Heart left ventricle (tissue), 16 donors: ENCODE measurements at regions of chr19 and their contacts with region 1.

Region 1: GRCh38 chr19:48674921-48675824 is 2.4 kb upstream of the NTN5 start:
- DNase-seq: peak; percentile 79 to 87 (median 84)
- ATAC-seq: peak; percentile 58 to 89 (median 80)
- H3K4me3 ChIP-seq: no peak overlapping the region
- H3K27ac ChIP-seq: peak overlapping the region in 2 of 12 donors; percentile 2 to 46
- H3K4me1 ChIP-seq: peaks cover 0 to 12% (median 7%) of the 10 kb centered on the region in 12 donors
- H3K27me3 ChIP-seq: no peaks in the 10 kb centered on the region
- CTCF ChIP-seq: peak; percentile 76 to 94 (median 87)
- POLR2A ChIP-seq: no peak

Region 2: GRCh38 chr19:48713864-48714758 is 38.9 kb after region 1 on chr19:
- intact Hi-C with region 1: loop called in 7 of 10 experiments (anchors 5 kb)
- DNase-seq: peak; percentile 99 to 100 (median 99)
- ATAC-seq: peak; percentile 91 to 94 (median 92)
- H3K4me3 ChIP-seq: peak overlapping the region; percentile 45 to 84 (median 68)
- H3K27ac ChIP-seq: peak overlapping the region; percentile 76 to 91 (median 87)
- H3K4me1 ChIP-seq: peaks cover 4 to 53% (median 34%) of the 10 kb centered on the region in 12 donors
- H3K27me3 ChIP-seq: no peaks in the 10 kb centered on the region
- CTCF ChIP-seq: peak in 1 of 12 donors; percentile 16
- POLR2A ChIP-seq: peak in 1 of 2 donors; percentile 50

Region 3: GRCh38 chr19:48738557-48739399 is 63.6 kb after region 1 on chr19:
- intact Hi-C with region 1: loop called in 8 of 10 experiments (anchors 2 to 10 kb)
- DNase-seq: peak; percentile 95 to 98 (median 96)
- ATAC-seq: peak; percentile 78 to 91 (median 84)
- H3K4me3 ChIP-seq: peak overlapping the region; percentile 30 to 95 (median 70)
- H3K27ac ChIP-seq: peak overlapping the region; percentile 82 to 99 (median 90)
- H3K4me1 ChIP-seq: peaks cover 0 to 34% (median 15%) of the 10 kb centered on the region in 12 donors
- H3K27me3 ChIP-seq: peaks cover 0 to 11% (median 0%) of the 10 kb centered on the region in 9 donors
- CTCF ChIP-seq: peak in 10 of 12 donors; percentile 24 to 66 (median 44)
- POLR2A ChIP-seq: peak in 1 of 2 donors; percentile 45

Region 4: GRCh38 chr19:48780631-48781391 is 105.6 kb after region 1 on chr19:
- intact Hi-C with region 1: loop called in 5 of 10 experiments (anchors 5 to 10 kb)
- DNase-seq: no peak
- ATAC-seq: peak in 2 of 4 donors; percentile 18 to 30
- H3K4me3 ChIP-seq: no peak overlapping the region
- H3K27ac ChIP-seq: peak overlapping the region in 10 of 12 donors; percentile 6 to 83 (median 61)
- H3K4me1 ChIP-seq: peaks cover 0 to 26% (median 8%) of the 10 kb centered on the region in 12 donors
- H3K27me3 ChIP-seq: no peaks in the 10 kb centered on the region
- CTCF ChIP-seq: no peak
- POLR2A ChIP-seq: no peak

Region 5: GRCh38 chr19:48842789-48843162 is 167.6 kb after region 1 on chr19:
- intact Hi-C with region 1: loop called in 6 of 10 experiments (anchors 10 kb)
- DNase-seq: peak in 2 of 5 donors; percentile 36 to 37
- ATAC-seq: peak; percentile 10 to 70 (median 50)
- H3K4me3 ChIP-seq: no peak overlapping the region
- H3K27ac ChIP-seq: no peak overlapping the region
- H3K4me1 ChIP-seq: no peaks in the 10 kb centered on the region
- H3K27me3 ChIP-seq: no peaks in the 10 kb centered on the region
- CTCF ChIP-seq: peak; percentile 72 to 85 (median 78)
- POLR2A ChIP-seq: no peak